OCI-LY7 (cell line): ENCODE measurements at regions of chr3 and their contacts with region 1.

Region 1: GRCh38 chr3:96863129-96863740 is 48.8 kb downstream of the EPHA6 start:
- DNase-seq: peak; percentile 33
- H3K4me3 ChIP-seq: no peak overlapping the region
- H3K27ac ChIP-seq: no peak overlapping the region
- H3K4me1 ChIP-seq: no peaks in the 10 kb centered on the region
- CTCF ChIP-seq: peak; percentile 78

Region 2: DNA sequence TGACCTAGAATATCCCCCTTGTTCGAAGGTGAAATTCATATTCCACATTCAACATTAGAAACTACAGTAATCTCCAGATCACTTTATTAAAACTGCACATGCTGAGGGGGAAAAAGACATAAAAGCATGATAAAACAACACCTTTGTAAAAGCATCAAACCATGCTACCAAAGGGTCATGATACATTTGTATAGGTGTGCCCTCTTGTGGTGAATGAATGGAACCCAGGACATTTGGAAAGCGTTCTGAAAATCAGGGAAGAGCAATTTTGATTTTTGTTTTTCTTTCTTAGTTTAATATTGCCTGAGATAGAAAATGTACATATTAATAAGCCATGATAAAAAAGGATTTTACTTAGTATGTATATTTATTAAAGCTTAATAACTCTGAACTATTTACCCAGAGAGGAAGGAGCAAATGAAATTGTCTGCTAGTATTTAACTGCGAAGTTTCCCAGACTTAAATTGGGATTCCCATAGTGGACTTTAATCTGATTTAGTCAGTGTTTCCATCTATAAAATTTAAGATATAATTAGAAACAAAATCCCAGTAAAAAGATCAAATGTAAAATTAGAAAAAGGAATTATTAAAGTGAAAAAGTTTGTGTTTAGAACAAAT is 795.5 kb after region 1 on chr3:
- CTCF ChIA-PET with region 1: no interaction called
- POLR2A ChIA-PET with region 1: no interaction called
- intact Hi-C with region 1: loop called (anchors 5 kb)
- DNase-seq: peak; percentile 45
- H3K4me3 ChIP-seq: no peak overlapping the region
- H3K27ac ChIP-seq: no peak overlapping the region
- H3K4me1 ChIP-seq: no peaks in the 10 kb centered on the region
- CTCF ChIP-seq: peak; percentile 85

Region 3: DNA sequence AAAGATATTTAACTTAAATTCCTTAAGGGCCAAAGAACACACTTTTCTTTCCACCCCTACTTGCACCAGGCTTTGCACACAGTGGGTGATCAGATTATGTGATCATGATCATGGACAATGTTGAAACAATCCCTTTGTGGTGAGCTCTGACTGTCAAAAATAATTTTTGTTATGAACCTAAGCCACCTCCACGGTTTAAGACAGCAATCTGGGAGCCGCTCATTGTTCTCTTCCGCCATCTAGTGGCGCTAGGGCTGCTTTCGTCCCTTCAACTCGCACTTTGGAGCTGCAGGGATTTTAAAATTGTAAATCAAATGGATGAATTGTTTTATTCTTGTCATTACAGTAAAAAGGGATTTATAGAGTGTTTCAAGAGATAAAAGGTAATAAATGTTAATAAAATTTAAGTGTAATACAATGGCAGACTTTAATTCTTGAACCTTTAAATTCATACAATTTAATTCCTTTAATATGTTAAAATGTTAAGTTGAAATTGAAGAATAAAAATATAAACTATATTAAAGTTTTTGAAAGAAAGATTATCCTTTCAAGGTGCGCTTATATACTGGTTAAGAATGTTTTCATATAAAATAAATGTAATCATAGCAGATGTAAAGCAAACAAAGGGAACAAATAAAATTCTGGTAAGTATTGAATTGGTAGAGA is 856.1 kb after region 1 on chr3:
- CTCF ChIA-PET with region 1: no interaction called
- POLR2A ChIA-PET with region 1: no interaction called
- intact Hi-C with region 1: loop called (anchors 10 kb)
- DNase-seq: peak; percentile 61
- H3K4me3 ChIP-seq: no peak overlapping the region
- H3K27ac ChIP-seq: no peak overlapping the region
- H3K4me1 ChIP-seq: no peaks in the 10 kb centered on the region
- CTCF ChIP-seq: peak; percentile 97

Region 4: DNA sequence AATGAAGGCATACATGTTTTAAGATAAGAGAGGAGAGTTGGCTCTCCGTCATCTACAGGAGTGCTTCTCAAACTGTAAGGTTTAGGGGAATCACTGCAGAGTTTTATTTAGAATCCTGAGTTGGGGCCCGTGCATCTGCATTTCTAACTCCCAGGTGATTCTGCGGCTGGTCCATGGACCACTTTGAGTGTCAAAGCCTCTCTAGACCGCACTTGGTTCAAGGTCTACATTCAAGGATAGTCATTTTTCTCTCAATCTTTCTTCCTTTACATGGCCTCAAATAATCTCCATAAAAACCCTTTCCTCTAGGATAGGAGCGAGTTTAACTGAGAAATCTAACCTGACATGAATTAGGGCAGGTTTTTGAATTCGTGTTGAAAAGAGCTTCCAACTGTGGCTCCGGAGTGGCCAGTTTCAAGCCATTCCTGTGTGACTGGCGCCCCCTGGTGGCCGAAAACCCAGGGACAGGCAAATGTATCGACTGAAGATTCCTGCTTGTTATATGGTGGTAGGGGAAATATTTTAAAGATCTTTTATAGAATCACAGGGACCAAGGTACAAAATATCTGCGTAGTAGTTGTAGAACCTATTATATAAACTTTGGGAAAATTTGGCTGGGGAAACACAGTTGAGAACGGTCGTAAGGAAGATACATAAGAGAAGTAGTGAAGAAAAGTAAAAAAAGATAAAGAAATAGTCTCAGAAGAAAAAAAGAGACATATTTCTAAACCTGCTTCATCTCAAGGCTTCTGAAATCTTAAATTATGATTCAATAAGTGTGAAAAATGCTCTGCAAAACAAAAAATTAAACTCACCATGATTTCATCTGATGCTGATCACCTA is 1160.0 kb after region 1 on chr3:
- CTCF ChIA-PET with region 1: no interaction called
- POLR2A ChIA-PET with region 1: no interaction called
- intact Hi-C with region 1: loop called (anchors 10 kb)
- DNase-seq: peak; percentile 70
- H3K4me3 ChIP-seq: no peak overlapping the region
- H3K27ac ChIP-seq: no peak overlapping the region
- H3K4me1 ChIP-seq: no peaks in the 10 kb centered on the region
- CTCF ChIP-seq: peak; percentile 100